Left ventricle myocardium superior (tissue), 1 donor: ENCODE measurements at regions of chr5 and their contacts with region 1.

Region 1: GRCh38 chr5:40688127-40688761 is 8.5 kb downstream of the PTGER4 start:
- DNase-seq: peak; percentile 80
- ATAC-seq: peak; percentile 94

Region 2: GRCh38 chr5:39578887-39579497 is 1109.3 kb before region 1 on chr5:
- intact Hi-C with region 1: loop called (anchors 2 kb)
- DNase-seq: no peak
- ATAC-seq: no peak